Right ventricle myocardium inferior (tissue), 1 donor: ENCODE measurements at regions of chr12 and their contacts with region 1.

Region 1: DNA sequence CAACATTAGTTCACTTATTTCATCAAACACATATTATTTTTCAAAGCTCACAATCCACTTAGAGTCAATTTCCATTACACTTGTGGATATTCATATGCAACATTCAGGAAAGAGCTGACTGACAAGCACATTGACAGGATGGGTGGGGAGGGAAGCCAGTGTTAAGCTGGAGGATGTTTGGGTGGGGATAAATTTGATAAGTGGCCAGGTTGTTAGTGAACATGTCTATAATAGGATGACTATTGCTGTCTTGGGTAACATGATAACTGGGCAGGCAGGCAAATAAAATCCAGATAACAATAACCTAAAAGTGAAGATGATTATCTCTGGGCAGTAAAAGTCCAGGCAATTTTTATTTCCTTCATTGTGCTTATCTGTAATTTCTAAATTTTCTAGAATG is 73.8 kb upstream of the OSBPL8 start:
- DNase-seq: no peak
- ATAC-seq: no peak

Region 2: DNA sequence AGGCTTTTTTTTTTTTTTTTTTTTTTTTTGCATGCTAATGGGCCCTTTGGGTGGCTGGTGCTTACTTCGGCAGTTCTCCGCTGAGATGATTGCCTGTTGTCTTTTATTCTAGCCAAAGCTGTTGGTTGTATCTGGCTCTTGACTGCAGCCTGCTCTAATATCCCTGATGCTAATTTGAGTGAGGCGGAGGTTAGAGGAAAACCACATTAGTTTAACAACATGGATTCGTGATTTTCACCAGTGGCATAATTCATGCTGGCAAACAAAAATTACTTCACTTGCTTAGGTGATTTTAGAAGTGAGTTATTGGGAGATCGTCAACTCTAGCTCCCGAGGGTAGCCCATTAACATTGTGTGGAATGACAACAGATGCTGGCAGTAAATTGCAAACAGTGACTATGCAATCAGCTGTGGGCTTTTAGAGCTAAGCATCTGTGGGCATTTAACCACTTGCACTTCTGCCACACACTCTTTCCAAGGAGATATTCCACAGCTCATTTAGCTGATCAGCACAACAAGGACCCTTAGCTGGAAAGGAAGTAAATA is 32.9 kb after region 1 on chr12:
- intact Hi-C with region 1: loop called (anchors 5 kb)
- DNase-seq: no peak
- ATAC-seq: no peak